Esophagus muscularis mucosa (tissue), 4 donors: ENCODE measurements at regions of chr6 and their contacts with region 1.

Region 1: GRCh38 chr6:148947621-148948444 is 201.0 kb downstream of the UST start:
- DNase-seq: no peak
- H3K4me3 ChIP-seq: no peak overlapping the region
- H3K27ac ChIP-seq: no peak overlapping the region
- H3K4me1 ChIP-seq: peaks cover 0 to 45% (median 26%) of the 10 kb centered on the region in 4 donors
- H3K27me3 ChIP-seq: no peaks in the 10 kb centered on the region
- CTCF ChIP-seq: peak; percentile 82 to 93 (median 91)
- EP300 ChIP-seq: no peak
- POLR2A ChIP-seq: no peak

Region 2: DNA sequence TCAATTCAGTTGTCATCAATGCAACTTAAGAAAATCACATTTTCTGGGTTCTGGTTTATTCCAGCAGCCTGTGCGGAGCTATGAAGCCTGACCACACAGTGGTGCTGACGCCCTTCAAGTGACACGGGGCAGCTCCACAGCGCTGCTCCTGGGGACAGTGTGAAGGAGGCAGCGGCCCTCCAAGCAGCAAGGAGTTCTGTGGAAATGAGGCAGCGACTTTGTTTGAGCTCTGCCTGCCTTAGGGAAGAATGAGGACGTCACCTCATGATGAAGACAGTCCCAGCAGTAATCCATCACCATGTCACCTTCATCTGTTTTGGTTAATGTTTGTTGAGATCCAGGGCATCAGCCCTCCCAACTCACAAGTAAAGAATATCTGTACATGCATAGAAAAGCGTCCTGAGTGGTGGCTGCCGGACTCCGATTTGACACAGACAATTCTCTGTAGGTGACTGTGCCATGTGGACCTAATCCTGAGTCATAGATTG is 369.5 kb before region 1 on chr6:
- intact Hi-C with region 1: loop called (anchors 2 kb)
- DNase-seq: peak; percentile 85
- H3K4me3 ChIP-seq: no peak overlapping the region
- H3K27ac ChIP-seq: peak overlapping the region in 1 of 4 donors; percentile 2
- H3K4me1 ChIP-seq: peaks cover 0 to 13% (median 9%) of the 10 kb centered on the region in 4 donors
- H3K27me3 ChIP-seq: no peaks in the 10 kb centered on the region
- CTCF ChIP-seq: peak; percentile 83 to 89 (median 87)
- EP300 ChIP-seq: no peak
- POLR2A ChIP-seq: no peak

Region 3: DNA sequence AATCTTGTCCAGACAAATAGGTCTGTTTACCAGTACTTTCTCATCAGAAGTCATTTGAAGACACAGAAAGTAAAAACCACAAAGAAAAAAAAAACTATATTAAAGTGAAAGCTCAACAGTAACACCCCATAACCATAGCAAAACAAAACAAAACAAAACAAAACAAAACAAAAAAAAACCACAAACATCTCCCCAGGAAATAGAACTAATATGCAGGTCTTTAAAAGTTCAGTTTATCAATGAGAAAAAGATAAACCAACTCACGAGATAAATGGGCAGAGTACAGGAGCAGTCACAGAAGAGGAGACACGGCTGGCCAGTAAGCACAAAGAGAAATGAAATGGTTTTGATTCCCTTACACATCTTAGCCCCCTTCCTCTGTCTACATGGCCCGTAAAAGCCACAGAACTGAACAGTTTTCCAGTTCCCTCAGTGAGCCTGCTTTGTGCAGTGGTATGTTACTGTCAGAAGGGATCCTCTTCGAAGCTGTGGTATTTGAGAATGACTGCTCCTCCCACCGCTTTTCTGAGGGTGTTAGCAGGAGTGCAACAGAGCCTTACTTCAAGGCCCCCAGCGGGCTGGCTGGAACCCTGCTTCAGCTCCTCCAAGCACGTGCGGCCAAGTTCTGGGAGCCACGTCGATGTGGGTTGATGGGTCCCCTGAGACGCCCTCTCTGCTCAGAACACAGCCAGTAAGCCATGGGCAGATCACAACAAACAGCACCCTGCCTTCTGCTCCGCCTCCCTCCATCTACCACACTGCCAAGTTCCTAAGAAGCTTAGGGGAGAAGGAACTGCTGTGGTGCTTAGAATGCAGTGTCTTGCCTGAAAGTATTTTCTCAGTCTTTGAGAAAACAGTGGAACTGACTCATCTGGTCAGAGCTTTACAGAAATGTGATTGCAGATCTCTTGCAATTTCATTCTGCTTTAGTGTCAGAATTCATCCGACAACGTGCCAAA is 187.0 kb before region 1 on chr6:
- intact Hi-C with region 1: loop called (anchors 5 kb)
- DNase-seq: peak; percentile 93
- H3K4me3 ChIP-seq: peak overlapping the region; percentile 26 to 51 (median 42)
- H3K27ac ChIP-seq: peak overlapping the region; percentile 60 to 77 (median 70)
- H3K4me1 ChIP-seq: peaks cover 24 to 51% (median 42%) of the 10 kb centered on the region in 4 donors
- H3K27me3 ChIP-seq: no peaks in the 10 kb centered on the region
- CTCF ChIP-seq: no peak
- EP300 ChIP-seq: no peak
- POLR2A ChIP-seq: no peak